Mammary epithelial cell (primary cell): ENCODE measurements at regions of chrX and their contacts with region 1.

Region 1: DNA sequence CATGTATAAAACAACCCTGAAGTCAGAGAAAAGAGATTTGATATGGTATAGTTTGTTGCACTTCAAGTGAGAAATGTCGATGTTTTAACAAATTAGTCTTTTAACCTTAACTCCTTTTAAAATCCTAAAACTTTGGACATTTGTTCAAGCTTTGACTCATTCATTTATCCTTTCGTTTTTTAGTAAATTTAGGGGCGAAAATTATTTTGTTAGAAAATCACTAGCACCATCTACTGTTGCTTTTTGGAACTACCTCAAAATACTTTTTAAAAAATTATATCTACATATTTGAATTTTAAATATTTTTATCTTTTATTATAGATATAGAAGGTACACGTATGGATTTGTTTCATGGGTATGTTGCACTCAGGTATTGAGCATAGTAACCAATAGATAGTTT is 165.1 kb upstream of the POF1B start:
- DNase-seq: no peak
- H3K4me3 ChIP-seq: no peak overlapping the region
- H3K27ac ChIP-seq: no peak overlapping the region
- H3K4me1 ChIP-seq: no peaks in the 10 kb centered on the region
- H3K27me3 ChIP-seq: no peaks in the 10 kb centered on the region
- CTCF ChIP-seq: peak; percentile 19 to 46

Region 2: DNA sequence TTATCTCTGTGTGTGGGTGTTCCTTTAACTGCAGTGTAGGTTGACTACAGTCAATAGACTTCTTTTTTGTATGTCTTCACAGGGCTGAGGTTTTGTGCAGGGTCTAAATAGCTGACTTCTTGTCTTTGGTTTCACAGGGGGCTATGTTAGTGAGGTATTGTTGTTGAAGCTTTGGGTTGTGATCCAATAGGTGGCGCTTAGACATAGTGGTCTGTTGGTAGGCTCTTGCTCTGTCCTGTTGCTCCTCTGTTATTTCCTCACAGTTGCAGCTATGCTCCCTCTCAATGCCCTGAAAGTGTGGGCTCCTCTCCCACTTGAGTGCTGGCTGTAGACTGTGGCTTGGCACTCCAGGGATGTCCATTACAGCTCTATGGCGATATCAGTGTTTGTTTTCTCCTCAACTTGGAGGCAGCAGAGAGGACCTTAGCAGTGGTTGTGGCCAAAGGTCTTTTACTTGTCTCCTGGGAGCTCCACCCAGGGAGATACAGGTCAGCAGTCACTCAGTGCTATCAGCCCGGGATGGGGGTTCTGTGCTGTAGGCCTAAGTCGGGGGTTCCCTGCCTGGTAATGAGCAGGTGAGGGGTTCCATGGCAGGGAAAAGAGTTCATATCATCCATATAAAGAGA is 179.1 kb before region 1 on chrX:
- CTCF ChIA-PET with region 1: no interaction called
- dilution Hi-C with region 1: no loop called
- in situ Hi-C with region 1: no loop called
- intact Hi-C with region 1: loop called (anchors 1 kb)
- DNase-seq: no peak
- H3K4me3 ChIP-seq: no peak overlapping the region
- H3K27ac ChIP-seq: no peak overlapping the region
- H3K4me1 ChIP-seq: no peaks in the 10 kb centered on the region
- H3K27me3 ChIP-seq: no peaks in the 10 kb centered on the region
- CTCF ChIP-seq: peak in 1 of 2 donors; percentile 21

Region 3: DNA sequence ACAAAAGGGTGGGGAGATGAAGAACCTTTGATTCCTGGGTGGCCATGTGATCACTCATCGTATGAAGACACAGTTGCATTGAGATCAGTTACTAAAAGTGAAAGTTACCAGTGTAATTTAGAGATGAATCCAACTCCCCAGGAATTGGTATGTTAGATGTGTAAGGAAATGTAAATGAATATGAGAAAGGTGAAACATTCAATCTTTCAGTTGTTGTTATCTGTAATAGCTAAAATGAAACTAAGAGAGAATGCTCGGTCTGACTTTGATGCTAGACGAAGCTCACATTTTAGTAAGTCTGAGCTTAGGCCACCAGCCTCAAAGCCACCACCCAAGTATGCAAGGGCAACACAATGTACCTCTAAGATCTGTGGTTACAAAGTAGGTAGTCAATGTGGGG is 29.2 kb after region 1 on chrX:
- CTCF ChIA-PET with region 1: no interaction called
- dilution Hi-C with region 1: no loop called
- in situ Hi-C with region 1: no loop called
- intact Hi-C with region 1: no loop called
- DNase-seq: no peak
- H3K4me3 ChIP-seq: no peak overlapping the region
- H3K27ac ChIP-seq: no peak overlapping the region
- H3K4me1 ChIP-seq: no peaks in the 10 kb centered on the region
- H3K27me3 ChIP-seq: peaks cover 2% of the 10 kb centered on the region
- CTCF ChIP-seq: no peak